ENCODE measurements at regions of chr4 and their contacts with region 1.

Region 1: GRCh38 chr4:158856852-158857251 is 88.0 kb downstream of the FNIP2 start:
- DNase-seq: no peak
- ATAC-seq: peak; percentile 76
- H3K4me3 ChIP-seq: no peak overlapping the region
- H3K4me1 ChIP-seq: no peaks in the 10 kb centered on the region
- CTCF ChIP-seq: peak; percentile 10

Region 2: DNA sequence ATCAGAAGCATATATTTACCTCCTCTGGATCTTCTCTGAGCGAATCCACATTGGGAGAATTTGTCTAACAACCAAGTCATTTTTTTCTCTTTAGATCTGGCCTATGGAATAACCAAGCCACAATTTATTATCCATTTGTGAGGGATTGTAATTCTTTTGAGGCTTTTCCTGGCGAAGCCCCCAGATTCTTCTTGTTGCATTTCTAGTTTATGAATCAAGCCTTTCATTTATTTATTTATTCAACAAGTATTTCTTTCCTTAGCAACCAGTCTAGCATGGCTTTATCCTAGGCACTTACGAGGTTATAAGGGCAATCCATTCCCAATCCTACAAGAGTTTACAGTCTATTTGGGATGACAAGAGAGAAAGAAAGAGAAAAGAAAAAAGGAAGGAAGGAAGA is 106.5 kb before region 1 on chr4:
- intact Hi-C with region 1: no loop called
- DNase-seq: no peak
- ATAC-seq: no peak
- H3K4me3 ChIP-seq: no peak overlapping the region
- H3K4me1 ChIP-seq: no peaks in the 10 kb centered on the region
- CTCF ChIP-seq: no peak

Region 3: GRCh38 chr4:159175085-159175988 is 318.5 kb after region 1 on chr4:
- intact Hi-C with region 1: loop called (anchors 5 kb)
- DNase-seq: peak in 1 of 3 donors; percentile 78
- ATAC-seq: peak; percentile 91
- H3K4me3 ChIP-seq: no peak overlapping the region
- H3K4me1 ChIP-seq: peaks cover 3% of the 10 kb centered on the region
- CTCF ChIP-seq: peak; percentile 55

Region 4: DNA sequence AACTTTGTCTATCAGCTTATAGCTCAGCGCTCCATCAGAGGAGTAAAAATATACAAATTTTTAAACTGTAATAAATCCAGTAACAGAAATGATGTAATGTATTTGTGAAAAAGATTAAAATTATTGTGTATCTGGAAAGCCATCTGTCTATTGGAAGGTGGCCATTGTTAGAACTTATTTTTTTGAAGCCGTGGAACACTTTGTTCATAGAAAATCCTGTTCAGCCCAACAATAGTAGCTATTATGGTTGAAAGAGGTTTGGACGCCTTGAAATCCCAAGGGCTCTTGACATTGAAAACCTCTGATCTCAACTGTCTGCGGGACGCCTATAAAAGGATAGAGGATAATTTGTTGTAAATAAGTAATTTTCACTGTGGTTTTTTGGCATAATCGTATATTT is 344.3 kb after region 1 on chr4:
- intact Hi-C with region 1: loop called (anchors 5 to 10 kb)
- DNase-seq: no peak
- ATAC-seq: no peak
- H3K4me3 ChIP-seq: no peak overlapping the region
- H3K4me1 ChIP-seq: no peaks in the 10 kb centered on the region
- CTCF ChIP-seq: no peak

Region 5: DNA sequence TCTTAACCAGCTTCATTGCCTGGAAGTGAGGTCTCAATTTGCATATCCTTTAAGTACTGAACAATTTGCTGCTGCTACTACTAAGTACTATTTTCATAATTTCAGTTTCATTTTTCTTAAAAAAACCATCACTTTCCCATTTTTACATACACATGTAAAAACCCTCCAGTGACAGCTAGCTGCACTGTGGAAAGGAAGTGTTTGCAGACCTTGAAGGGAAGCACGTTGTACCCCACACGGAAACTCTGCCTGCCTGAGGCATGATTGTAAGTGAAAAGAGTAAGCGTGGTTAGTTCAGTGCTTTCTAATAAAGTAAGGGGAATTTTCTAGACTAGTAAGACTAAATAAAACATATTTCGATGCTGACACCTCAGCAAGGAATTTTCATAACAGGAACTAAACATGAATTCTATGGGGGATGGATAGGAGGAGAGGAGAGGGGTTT is 349.6 kb after region 1 on chr4:
- intact Hi-C with region 1: loop called (anchors 5 to 10 kb)
- DNase-seq: no peak
- ATAC-seq: no peak
- H3K4me3 ChIP-seq: no peak overlapping the region
- H3K4me1 ChIP-seq: no peaks in the 10 kb centered on the region
- CTCF ChIP-seq: no peak

Region 6: DNA sequence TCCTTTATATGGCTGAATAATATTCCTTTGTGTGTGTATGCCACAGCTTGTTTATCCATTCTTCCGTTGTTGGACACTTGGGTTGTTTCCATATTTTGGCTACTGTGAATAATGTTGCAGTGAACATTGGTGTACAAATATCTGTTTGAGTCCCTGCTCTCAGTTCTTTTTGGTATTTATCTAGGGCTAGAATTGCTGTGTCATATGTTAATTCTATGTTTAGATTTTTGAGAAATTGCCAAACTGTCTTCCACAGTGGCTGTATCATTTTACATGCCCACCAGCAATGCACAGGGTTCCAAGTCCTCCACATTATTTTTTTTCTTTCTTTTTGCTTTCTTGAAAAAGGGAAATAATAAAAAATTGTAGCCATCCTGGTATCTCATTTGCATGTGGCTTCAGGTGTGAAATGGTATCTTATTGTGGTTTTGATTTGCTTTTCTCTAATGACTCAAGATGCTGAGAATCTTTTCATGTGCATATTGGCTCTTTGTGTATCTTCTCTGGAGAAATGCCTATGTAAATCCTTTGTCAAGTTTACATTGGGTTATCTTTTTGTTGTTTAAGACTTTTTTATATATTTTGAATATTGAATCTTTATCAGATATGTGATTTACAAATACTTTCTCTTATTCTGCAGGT is 375.7 kb after region 1 on chr4:
- intact Hi-C with region 1: no loop called
- DNase-seq: no peak
- ATAC-seq: no peak
- H3K4me3 ChIP-seq: no peak overlapping the region
- H3K4me1 ChIP-seq: peaks cover 8% of the 10 kb centered on the region
- CTCF ChIP-seq: no peak

Measured in mucosa of descending colon (tissue), 3 donors.